Dorsolateral prefrontal cortex (tissue), 120 donors: ENCODE measurements at regions of chr14 and their contacts with region 1.

Region 1: GRCh38 chr14:37150414-37150813 is 22.0 kb downstream of the SLC25A21 start:
- DNase-seq: no peak
- H3K4me3 ChIP-seq: no peak overlapping the region
- H3K27ac ChIP-seq: no peak overlapping the region
- H3K27me3 ChIP-seq: no peaks in the 10 kb centered on the region
- CTCF ChIP-seq: peak; percentile 65 to 94 (median 83)

Region 2: GRCh38 chr14:36973806-36974442 is 176.5 kb before region 1 on chr14:
- intact Hi-C with region 1: no loop called
- DNase-seq: no peak
- H3K4me3 ChIP-seq: no peak overlapping the region
- H3K27ac ChIP-seq: no peak overlapping the region
- H3K27me3 ChIP-seq: peaks cover 0 to 5% (median 0%) of the 10 kb centered on the region in 45 donors
- CTCF ChIP-seq: no peak

Region 3: DNA sequence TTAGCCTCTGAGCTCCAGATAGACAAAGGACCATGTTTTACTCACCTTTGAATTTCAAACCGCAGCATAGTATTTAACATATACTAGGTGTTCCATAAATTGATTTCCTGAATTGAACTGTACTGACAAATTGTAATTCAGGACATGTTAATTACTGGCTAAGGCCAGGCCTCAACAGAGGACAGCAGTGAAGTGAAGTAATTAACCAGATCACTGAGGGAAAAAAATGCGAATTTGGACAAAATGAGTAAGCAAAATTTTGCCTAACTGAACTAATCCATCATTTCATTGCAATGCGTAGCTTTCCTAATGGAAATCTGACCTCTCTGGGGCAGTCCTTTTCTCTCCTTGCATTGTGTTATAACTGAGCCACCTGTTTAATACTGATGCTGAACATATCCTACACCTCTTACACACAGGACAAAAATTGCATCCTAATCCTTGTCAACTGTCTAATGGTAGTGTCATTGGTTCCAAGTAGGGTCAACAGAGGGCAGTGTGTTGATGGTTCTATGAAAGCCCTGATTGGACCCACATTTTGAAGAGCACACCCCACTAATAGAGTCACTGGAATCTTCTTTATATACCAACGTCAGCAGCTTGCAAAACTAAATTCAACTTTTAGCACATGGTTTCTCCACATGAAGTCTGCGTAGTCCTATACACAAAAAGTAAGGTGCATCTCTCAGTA is 126.4 kb before region 1 on chr14:
- intact Hi-C with region 1: loop called in 1 of 2 experiments (anchors 10 kb)
- DNase-seq: no peak
- H3K4me3 ChIP-seq: no peak overlapping the region
- H3K27ac ChIP-seq: no peak overlapping the region
- H3K27me3 ChIP-seq: no peaks in the 10 kb centered on the region
- CTCF ChIP-seq: peak in 35 of 56 donors; percentile 11 to 59 (median 29)